ENCODE measurements at regions of chr6 and their contacts with region 1.

Region 1: DNA sequence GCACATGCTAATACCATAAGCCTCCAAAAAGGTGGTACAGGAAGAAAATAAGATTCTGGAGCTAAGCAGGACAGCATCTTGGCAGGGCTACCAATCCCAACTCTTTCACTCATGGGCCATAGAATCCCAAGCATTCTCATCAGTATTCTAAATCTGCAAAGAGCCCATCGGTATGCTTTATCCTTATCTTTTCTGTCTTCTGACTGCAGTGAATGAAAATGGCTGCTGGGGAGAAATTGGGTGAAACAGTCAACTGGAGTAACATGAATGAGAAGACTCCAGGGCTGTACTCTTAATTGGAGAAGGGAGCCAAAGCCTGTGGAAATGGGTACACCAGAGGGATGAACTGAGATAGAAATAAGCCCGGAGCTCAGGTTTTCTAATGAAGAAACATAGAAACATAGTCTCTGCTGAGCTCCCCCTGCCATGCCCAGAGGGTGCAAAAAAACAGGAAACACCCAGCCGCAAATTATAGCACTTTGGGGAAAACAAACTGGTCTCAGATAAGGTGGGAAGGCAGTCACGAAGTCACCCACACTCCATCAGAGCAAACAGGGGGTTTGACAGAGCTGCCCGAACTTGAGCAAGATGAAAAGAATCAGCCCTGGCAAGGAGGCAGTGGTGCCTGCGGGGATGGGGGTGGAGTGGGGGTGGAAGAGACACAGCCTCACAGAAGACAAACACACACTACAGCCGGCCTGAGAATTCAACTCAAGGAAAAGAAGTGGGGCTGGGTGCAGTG is 35.4 kb upstream of the E2F3 start:
- DNase-seq: peak; percentile 53
- ATAC-seq: peak; percentile 73
- H3K4me3 Mint-ChIP-seq: peak overlapping the region; percentile 81
- H3K27ac Mint-ChIP-seq: peak overlapping the region; percentile 97
- H3K4me1 Mint-ChIP-seq: peaks cover 46% of the 10 kb centered on the region
- H3K27me3 Mint-ChIP-seq: no peaks in the 10 kb centered on the region

Region 2: GRCh38 chr6:20401205-20402091 is 35.2 kb after region 1 on chr6 and contains the start of gene E2F3:
- POLR2A ChIA-PET with region 1: interaction called, 39 read pairs
- DNase-seq: peak; percentile 94
- ATAC-seq: peak; percentile 86
- H3K4me3 Mint-ChIP-seq: peak within 1 kb of the TSS; percentile 95
- H3K27ac Mint-ChIP-seq: peak within 1 kb of the TSS; percentile 98
- H3K4me1 Mint-ChIP-seq: peaks cover 29% of the 10 kb centered on the region
- H3K27me3 Mint-ChIP-seq: no peaks in the 10 kb centered on the region
- total RNA-seq, gene E2F3: 26.8 to 28.0 TPM

Measured in activated naive CD8-positive, alpha-beta T cell treated with anti-CD3 and anti-CD28 coated beads, Interleukin-2, amount 10 ng/mL, durations not matched to agents 7 days and 5 days (primary cell).